ENCODE measurements at regions of chrX and their contacts with region 1.

Region 1: GRCh38 chrX:73855546-73855945 is 292.5 kb downstream of the CHIC1 start:
- DNase-seq: peak; percentile 61
- H3K4me3 Mint-ChIP-seq: no peak overlapping the region
- H3K27ac Mint-ChIP-seq: no peak overlapping the region
- H3K4me1 Mint-ChIP-seq: no peaks in the 10 kb centered on the region
- H3K27me3 Mint-ChIP-seq: no peaks in the 10 kb centered on the region

Region 2: GRCh38 chrX:73728602-73729001 is 126.9 kb before region 1 on chrX:
- CTCF ChIA-PET with region 1: no interaction called
- POLR2A ChIA-PET with region 1: no interaction called
- DNase-seq: no peak
- H3K4me3 Mint-ChIP-seq: no peak overlapping the region
- H3K27ac Mint-ChIP-seq: no peak overlapping the region
- H3K4me1 Mint-ChIP-seq: no peaks in the 10 kb centered on the region
- H3K27me3 Mint-ChIP-seq: no peaks in the 10 kb centered on the region

Region 3: DNA sequence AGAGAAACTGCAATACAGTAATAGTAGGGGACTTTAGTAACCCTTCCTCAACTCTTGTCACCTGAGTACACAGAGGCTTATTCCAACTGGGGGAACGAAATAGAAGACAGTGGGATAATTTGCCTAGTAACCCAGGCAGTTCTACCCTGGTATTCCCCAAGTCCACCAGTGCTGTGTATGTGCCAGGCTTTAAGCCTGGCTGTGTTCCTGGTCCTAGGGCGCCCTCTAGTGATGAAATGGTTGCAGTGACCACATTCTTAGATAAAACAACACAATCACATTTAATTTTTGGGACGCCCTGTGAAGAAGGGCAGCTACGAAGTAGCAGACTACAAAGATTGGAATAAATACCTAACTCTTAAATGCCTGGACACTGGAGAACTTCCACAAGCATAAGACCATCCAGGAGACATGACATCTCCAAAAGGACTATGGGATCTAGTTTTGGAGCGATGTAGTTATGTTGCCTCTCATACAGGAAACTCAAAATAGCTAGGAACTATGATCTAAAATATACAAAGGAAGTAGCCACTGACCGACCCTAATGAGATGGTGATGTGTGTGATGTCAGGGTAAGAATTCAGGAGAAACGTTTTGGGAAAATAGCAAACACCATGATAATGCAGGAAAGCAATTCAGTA is 160.0 kb after region 1 on chrX:
- CTCF ChIA-PET with region 1: interaction called, 10 read pairs
- POLR2A ChIA-PET with region 1: no interaction called
- DNase-seq: peak; percentile 54
- H3K4me3 Mint-ChIP-seq: no peak overlapping the region
- H3K27ac Mint-ChIP-seq: no peak overlapping the region
- H3K4me1 Mint-ChIP-seq: peaks cover 8% of the 10 kb centered on the region
- H3K27me3 Mint-ChIP-seq: no peaks in the 10 kb centered on the region